Right ventricle myocardium superior (tissue), 1 donor: ENCODE measurements at regions of chr2 and their contacts with region 1.

Region 1: GRCh38 chr2:121596221-121597080 is 52.8 kb downstream of the CLASP1 start:
- DNase-seq: peak; percentile 51
- ATAC-seq: peak; percentile 78

Region 2: GRCh38 chr2:121539750-121540469 is 56.5 kb before region 1 on chr2:
- intact Hi-C with region 1: loop called (anchors 5 kb)
- DNase-seq: no peak
- ATAC-seq: no peak

Region 3: GRCh38 chr2:121649596-121650314 is 53.3 kb after region 1 on chr2:
- intact Hi-C with region 1: loop called (anchors 5 kb)
- DNase-seq: peak; percentile 98
- ATAC-seq: peak; percentile 98

Region 4: GRCh38 chr2:122481717-122482116 is 885.3 kb after region 1 on chr2:
- intact Hi-C with region 1: no loop called
- DNase-seq: no peak
- ATAC-seq: no peak